HEK293 (cell line): ENCODE measurements at regions of chr6 and their contacts with region 1.

Region 1: GRCh38 chr6:155327326-155328073 is 13.2 kb upstream of the TFB1M start:
- H3K4me3 ChIP-seq: no peak overlapping the region
- H3K27ac ChIP-seq: no peak overlapping the region
- H3K4me1 ChIP-seq: no peaks in the 10 kb centered on the region
- CTCF ChIP-seq: no peak; the same call in 1 of the 2 replicates

Region 2: DNA sequence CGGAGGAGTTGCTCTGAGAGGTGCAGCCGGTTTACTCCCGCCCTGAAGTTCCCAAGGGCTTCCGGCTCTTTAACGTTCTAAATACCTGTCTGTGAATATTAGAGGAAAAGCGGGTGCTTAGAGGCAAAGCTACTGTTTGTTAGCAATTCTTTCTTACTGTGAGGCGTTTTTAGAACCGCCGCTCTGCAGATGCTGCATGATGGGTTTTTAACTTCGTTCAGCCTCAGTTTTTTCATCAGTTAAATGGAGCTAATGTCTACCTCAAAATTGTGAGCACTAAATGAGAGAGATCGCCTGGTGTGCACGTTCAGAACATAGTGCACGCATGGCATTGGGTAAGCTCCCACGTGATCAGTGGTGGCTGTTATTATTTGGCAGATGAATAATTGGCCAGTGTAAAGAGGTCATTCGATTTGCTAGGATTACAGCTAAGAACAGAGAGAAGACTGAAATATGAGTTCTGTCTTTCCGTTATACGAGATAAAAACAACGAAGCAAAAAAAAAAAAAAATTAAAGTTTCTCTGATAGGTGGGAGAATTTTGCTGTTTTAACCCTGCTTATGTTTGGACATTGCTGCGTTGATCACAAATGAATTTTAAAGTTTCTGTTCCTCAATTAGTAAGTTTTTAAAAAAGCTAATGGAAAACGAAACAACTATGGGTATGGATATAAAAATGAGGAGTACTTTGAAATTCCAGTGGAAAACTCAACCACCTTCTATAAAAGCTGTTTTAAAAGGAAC is 12.6 kb before region 1 on chr6:
- CTCF ChIA-PET with region 1: interaction called, 10 read pairs
- POLR2A ChIA-PET with region 1: interaction called, 3 read pairs
- H3K4me3 ChIP-seq: peak overlapping the region; percentile 57
- H3K27ac ChIP-seq: peak overlapping the region; percentile 33; the same call in 1 of the 2 replicates
- H3K4me1 ChIP-seq: peaks cover 5% of the 10 kb centered on the region; the same call in 1 of the 2 replicates
- CTCF ChIP-seq: no peak

Region 3: GRCh38 chr6:155340464-155341129 is 13.1 kb after region 1 on chr6:
- CTCF ChIA-PET with region 1: interaction called, 11 read pairs
- POLR2A ChIA-PET with region 1: no interaction called
- H3K4me3 ChIP-seq: no peak overlapping the region
- H3K27ac ChIP-seq: no peak overlapping the region
- H3K4me1 ChIP-seq: no peaks in the 10 kb centered on the region
- CTCF ChIP-seq: no peak

Region 4: DNA sequence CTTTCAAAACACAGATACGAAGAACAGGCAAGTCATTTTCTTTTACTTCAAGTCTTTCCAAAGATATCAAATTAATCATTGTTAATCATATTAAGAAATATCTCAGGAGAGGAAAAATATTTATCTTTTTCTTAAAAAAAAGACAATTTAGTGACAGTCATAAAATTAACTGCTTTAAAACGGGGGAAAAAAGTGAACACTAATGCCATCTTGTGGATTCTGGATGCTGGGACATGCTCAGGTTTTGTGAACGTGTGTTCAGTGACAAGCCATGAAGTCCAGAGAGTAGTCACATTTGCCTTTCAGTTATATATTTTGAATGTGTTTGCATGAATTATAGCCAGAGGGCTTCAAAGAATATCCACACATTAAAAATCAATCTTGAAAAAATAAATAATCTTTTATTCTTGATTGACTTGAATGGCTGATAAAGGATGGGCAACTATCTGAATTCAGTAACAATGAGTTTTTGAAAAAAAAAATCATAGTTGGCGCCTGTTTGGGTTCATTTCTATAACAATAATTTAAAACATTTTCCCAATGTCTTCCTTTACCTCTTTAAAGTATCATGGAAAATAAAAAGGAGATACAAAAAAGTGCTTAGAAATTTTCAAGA is 202.8 kb after region 1 on chr6:
- CTCF ChIA-PET with region 1: interaction called, 23 read pairs
- POLR2A ChIA-PET with region 1: interaction called, 3 read pairs
- H3K4me3 ChIP-seq: no peak overlapping the region
- H3K27ac ChIP-seq: no peak overlapping the region
- H3K4me1 ChIP-seq: no peaks in the 10 kb centered on the region
- CTCF ChIP-seq: 0 out of 2 replicates have a peak, but pooled peaks have one; percentile 15